ENCODE measurements at regions of chr19 and their contacts with region 1.

Region 1: GRCh38 chr19:39390755-39391592 is at the starts of genes MED29 and PAF1:
- DNase-seq: peak; percentile 100
- H3K4me3 ChIP-seq: peak within 1 kb of the TSS; percentile 60 to 84 (median 83)
- H3K27ac ChIP-seq: peak within 1 kb of the TSS; percentile 83
- H3K4me1 ChIP-seq: peaks cover 9% of the 10 kb centered on the region
- H3K27me3 ChIP-seq: no peaks in the 10 kb centered on the region
- CTCF ChIP-seq: peak in 1 of 2 donors; percentile 7
- POLR2A ChIP-seq: peak; percentile 98
- total RNA-seq, gene MED29: 24.7 and 25.5 TPM in 2 replicates
- total RNA-seq, gene PAF1: 53.6 and 55.1 TPM in 2 replicates

Region 2: GRCh38 chr19:39435499-39436349 is 44.8 kb after region 1 on chr19 and contains the start of gene RPS16:
- CTCF ChIA-PET with region 1: interaction called, 5 read pairs
- POLR2A ChIA-PET with region 1: interaction called, 11 read pairs
- dilution Hi-C with region 1: no loop called
- intact Hi-C with region 1: loop called (anchors 1 kb)
- DNase-seq: peak; percentile 98
- H3K4me3 ChIP-seq: peak within 1 kb of the TSS; percentile 96
- H3K27ac ChIP-seq: peak within 1 kb of the TSS; percentile 96
- H3K4me1 ChIP-seq: peaks cover 26% of the 10 kb centered on the region
- H3K27me3 ChIP-seq: no peaks in the 10 kb centered on the region
- CTCF ChIP-seq: no peak
- POLR2A ChIP-seq: peak; percentile 96
- total RNA-seq, gene RPS16: 1,735 and 1,768 TPM in 2 replicates

Measured in endothelial cell of umbilical vein (primary cell).